Activated CD4-positive, alpha-beta memory T cell treated with anti-CD3 and anti-CD28 coated beads, Interleukin-2, amount 10 ng/mL, durations not matched to agents 7 days and 5 days (primary cell): ENCODE measurements at regions of chr14 and their contacts with region 1.

Region 1: DNA sequence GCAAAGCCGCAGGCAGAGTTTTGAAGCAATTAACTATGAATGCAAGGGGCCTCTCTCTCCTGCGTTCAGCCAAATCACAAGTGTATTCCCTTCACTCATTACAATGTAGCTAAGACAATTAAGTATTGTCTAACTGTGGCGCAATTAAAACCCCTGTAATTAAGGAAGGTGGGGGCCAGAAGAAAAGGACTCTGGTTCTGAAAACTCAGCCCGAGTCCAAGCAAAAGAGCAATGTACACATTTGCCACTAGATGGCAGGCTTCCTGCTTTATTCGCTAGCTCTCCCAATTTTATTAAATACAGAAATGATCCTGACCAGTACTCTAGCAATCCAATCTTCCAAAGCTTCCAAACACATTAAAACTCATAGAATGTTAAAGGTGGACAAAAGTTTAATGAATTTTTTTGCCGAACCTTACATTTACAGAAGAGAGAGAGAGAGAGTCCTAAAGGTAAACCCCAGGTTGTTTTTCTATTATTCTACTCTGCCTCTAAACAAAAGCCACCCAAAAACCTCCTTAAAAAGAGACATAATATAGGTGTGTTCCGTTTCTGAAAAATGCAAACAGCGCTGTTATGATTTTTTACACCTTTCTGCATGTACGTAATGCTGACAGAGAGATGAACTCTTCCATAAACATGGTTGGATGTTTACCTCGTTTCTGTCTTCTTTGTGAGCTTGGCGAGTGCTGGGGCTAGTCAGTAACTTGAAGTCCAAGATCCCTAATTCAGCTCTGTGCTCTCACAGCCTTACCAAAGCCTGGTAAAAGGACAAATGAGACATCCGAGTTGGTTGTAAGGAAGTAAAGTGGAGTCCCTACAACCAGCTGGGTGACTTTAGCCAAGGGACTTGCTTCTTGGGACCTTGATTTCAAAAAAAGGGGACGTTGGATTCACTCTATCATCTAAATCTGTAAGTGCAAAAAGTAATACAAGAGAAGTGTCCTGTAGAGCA is 50.9 kb upstream of the VASH1 start:
- DNase-seq: no peak
- H3K4me3 Mint-ChIP-seq: no peak overlapping the region
- H3K27ac Mint-ChIP-seq: no peak overlapping the region
- H3K4me1 Mint-ChIP-seq: no peaks in the 10 kb centered on the region
- H3K27me3 Mint-ChIP-seq: peaks cover 6% of the 10 kb centered on the region

Region 2: GRCh38 chr14:76525106-76525821 is 185.1 kb before region 1 on chr14:
- CTCF ChIA-PET with region 1: no interaction called
- POLR2A ChIA-PET with region 1: no interaction called
- DNase-seq: no peak
- H3K4me3 Mint-ChIP-seq: no peak overlapping the region
- H3K27ac Mint-ChIP-seq: no peak overlapping the region
- H3K4me1 Mint-ChIP-seq: no peaks in the 10 kb centered on the region
- H3K27me3 Mint-ChIP-seq: peaks cover 25% of the 10 kb centered on the region

Region 3: GRCh38 chr14:76603713-76604112 is 106.6 kb before region 1 on chr14:
- CTCF ChIA-PET with region 1: no interaction called
- POLR2A ChIA-PET with region 1: no interaction called
- DNase-seq: no peak
- H3K4me3 Mint-ChIP-seq: no peak overlapping the region
- H3K27ac Mint-ChIP-seq: no peak overlapping the region
- H3K4me1 Mint-ChIP-seq: no peaks in the 10 kb centered on the region
- H3K27me3 Mint-ChIP-seq: peaks cover 5% of the 10 kb centered on the region

Region 4: DNA sequence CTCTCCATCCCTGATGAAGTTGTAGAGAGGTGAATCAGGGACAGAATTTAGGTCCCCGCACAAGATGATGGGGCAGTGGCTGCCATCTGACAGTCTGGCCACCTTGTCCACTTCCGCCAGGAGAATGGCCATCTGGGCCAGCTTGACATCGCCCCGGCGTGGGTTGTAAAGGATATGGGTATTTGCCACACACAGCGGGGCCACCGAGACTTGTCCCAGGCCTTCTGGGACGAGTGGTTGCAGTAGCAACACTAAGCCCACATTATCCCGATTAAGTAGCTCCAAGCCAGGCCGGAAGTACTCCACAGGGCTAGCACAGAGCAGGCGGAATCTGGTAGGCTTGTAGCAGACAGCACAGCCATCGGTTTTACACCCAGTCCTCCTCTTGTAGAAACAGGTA is 96.1 kb after region 1 on chr14:
- CTCF ChIA-PET with region 1: interaction called, 31 read pairs
- POLR2A ChIA-PET with region 1: no interaction called
- DNase-seq: no peak
- H3K4me3 Mint-ChIP-seq: no peak overlapping the region
- H3K27ac Mint-ChIP-seq: no peak overlapping the region
- H3K4me1 Mint-ChIP-seq: peaks cover 12% of the 10 kb centered on the region
- H3K27me3 Mint-ChIP-seq: no peaks in the 10 kb centered on the region

Region 5: GRCh38 chr14:76812211-76813044 is 102.1 kb after region 1 on chr14 and contains the start of gene ANGEL1:
- CTCF ChIA-PET with region 1: interaction called, 31 read pairs
- POLR2A ChIA-PET with region 1: no interaction called
- DNase-seq: peak; percentile 98
- H3K4me3 Mint-ChIP-seq: peak within 1 kb of the TSS; percentile 90
- H3K27ac Mint-ChIP-seq: peak within 1 kb of the TSS; percentile 73
- H3K4me1 Mint-ChIP-seq: peaks cover 25% of the 10 kb centered on the region
- H3K27me3 Mint-ChIP-seq: no peaks in the 10 kb centered on the region
- total RNA-seq, gene ANGEL1: 9.9 to 11.0 TPM